ENCODE measurements at regions of chr14 and their contacts with region 1.

Region 1: GRCh38 chr14:92292673-92293072 is 30.3 kb upstream of the SLC24A4 start:
- DNase-seq: no peak

Region 2: DNA sequence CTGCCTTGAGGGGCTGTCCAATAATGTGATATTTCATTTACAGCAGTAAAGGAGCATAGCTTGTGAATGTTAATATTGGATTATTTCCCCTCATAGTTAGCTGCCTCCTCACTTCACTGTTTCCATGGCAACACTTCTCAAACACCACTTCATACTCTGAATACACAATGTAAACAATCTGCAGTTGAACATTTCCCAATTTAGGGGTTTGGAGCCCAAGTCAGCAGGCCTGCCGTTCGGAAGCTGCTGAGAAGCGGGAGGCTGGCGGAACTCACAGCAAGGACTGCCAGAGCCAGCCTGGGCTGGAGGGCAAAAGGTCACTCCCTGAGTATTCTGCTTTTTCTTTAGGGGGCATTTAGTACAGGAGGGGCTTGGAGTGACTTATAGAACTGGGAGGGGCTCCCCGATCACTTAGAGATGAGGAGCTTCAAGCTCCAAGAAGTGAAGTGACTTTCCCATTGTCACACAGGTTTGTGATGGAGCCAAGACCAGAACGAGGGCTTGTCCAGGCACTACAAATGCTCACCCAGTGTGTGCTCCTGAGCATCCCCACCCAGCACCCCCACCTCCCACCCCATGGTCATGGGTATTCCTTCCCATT is 18.2 kb after region 1 on chr14:
- intact Hi-C with region 1: loop called in 1 of 2 experiments (anchors 1 kb)
- DNase-seq: peak; percentile 55